Heart left ventricle (tissue), 16 donors: ENCODE measurements at regions of chr15 and their contacts with region 1.

Region 1: DNA sequence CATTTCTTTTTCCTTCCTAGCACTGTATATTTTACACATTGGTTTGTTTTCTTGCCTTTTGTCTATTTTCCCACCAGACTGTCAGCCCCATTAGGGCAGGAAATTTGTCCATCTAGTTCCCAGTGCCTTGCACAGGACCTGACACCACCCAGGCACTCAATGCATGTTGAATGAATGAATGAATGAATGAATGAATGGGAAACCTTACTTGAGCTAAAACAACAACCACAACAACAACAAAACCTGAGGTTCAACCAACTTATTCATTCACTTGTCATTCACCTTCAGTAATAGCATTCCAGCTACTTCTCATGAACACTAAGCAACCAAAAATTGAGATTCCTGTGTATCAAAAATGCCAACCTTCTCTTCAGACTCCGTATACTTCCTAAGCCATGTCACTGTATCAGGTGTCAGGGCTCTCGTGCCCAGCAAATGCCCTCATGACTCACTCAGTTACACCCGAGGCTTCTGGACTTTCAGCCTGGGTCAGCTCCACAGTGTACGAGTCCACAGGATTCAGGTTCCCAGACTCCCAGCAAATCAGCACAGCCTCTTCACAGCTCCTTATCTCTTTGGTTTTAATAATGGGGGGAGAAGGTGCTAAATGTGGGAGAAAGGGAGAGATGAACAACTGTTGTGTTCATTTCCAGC is 37.3 kb downstream of the FSD2 start:
- DNase-seq: no peak
- ATAC-seq: peak in 2 of 4 donors; percentile 41 to 48
- H3K4me3 ChIP-seq: no peak overlapping the region
- H3K27ac ChIP-seq: no peak overlapping the region
- H3K4me1 ChIP-seq: peaks cover 0 to 8% (median 0%) of the 10 kb centered on the region in 12 donors
- H3K27me3 ChIP-seq: no peaks in the 10 kb centered on the region
- CTCF ChIP-seq: no peak
- POLR2A ChIP-seq: no peak

Region 2: DNA sequence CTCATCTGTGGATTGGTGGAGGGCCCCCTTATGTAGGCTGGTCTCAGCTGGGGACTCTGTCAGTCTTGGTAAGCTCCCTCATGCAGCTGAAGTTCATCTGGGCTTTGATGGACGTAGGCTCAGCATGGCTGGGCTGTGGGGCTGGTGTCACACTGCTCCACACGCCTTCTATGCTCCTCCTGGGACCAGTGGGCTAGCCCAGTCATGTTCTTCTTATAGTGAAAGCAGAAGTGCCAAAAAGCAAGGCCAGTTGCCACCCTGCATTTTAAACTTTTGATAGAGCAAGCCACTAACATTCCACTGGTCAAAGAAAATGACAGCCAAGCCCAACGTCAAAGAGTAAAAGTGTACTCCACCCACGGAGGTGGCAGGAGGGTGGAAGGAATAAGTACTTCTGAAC is 888.2 kb before region 1 on chr15:
- intact Hi-C with region 1: no loop called
- DNase-seq: no peak
- ATAC-seq: no peak
- H3K4me3 ChIP-seq: no peak overlapping the region
- H3K27ac ChIP-seq: no peak overlapping the region
- H3K4me1 ChIP-seq: no peaks in the 10 kb centered on the region
- H3K27me3 ChIP-seq: no peaks in the 10 kb centered on the region
- CTCF ChIP-seq: no peak
- POLR2A ChIP-seq: no peak

Region 3: GRCh38 chr15:82832601-82833361 is 64.2 kb after region 1 on chr15:
- intact Hi-C with region 1: loop called in 1 of 10 experiments (anchors 10 kb)
- DNase-seq: no peak
- ATAC-seq: peak in 1 of 4 donors; percentile 47
- H3K4me3 ChIP-seq: no peak overlapping the region
- H3K27ac ChIP-seq: peak overlapping the region in 1 of 12 donors; percentile 42
- H3K4me1 ChIP-seq: peaks cover 0 to 25% (median 0%) of the 10 kb centered on the region in 12 donors
- H3K27me3 ChIP-seq: no peaks in the 10 kb centered on the region
- CTCF ChIP-seq: no peak
- POLR2A ChIP-seq: no peak